ENCODE measurements at regions of chr13 and their contacts with region 1.

Region 1: GRCh38 chr13:72808917-72809500 is 27.1 kb downstream of the PIBF1 start:
- DNase-seq: peak in 2 of 9 experiments; percentile 41 to 57
- ATAC-seq: peak; percentile 36
- H3K4me3 ChIP-seq: no peak overlapping the region
- H3K4me3 Mint-ChIP-seq: no peak overlapping the region
- H3K27ac ChIP-seq: no peak overlapping the region
- H3K27ac Mint-ChIP-seq: no peak overlapping the region
- H3K4me1 ChIP-seq: no peaks in the 10 kb centered on the region
- H3K4me1 Mint-ChIP-seq: peaks cover 4% of the 10 kb centered on the region
- H3K27me3 ChIP-seq: no peaks in the 10 kb centered on the region
- H3K27me3 Mint-ChIP-seq: no peaks in the 10 kb centered on the region
- CTCF ChIP-seq: peak; percentile 89

Region 2: DNA sequence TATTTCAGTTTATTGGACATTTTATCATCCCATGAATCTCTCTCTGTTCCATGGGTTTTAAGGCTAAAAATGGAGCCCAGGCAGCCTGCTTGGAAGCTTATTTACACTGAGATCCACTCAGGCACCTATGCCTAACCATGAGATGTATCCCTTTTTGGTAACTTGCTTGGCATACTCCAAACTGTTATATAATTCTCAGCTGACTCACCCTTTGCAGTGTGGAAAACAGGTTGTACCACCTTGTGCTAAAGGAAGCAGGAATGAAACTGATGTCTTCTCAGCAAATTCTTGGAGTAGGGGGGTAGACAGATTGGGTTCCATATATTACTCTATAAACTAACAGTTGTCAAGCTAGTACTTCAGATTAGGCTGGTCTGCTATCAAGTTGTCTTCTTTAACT is 733.4 kb after region 1 on chr13:
- CTCF ChIA-PET with region 1: no interaction called
- POLR2A ChIA-PET with region 1: no interaction called
- intact Hi-C with region 1: no loop called
- DNase-seq: no peak
- ATAC-seq: no peak
- H3K4me3 ChIP-seq: no peak overlapping the region
- H3K4me3 Mint-ChIP-seq: no peak overlapping the region
- H3K27ac ChIP-seq: no peak overlapping the region
- H3K27ac Mint-ChIP-seq: no peak overlapping the region
- H3K4me1 ChIP-seq: no peaks in the 10 kb centered on the region
- H3K4me1 Mint-ChIP-seq: no peaks in the 10 kb centered on the region
- H3K27me3 ChIP-seq: no peaks in the 10 kb centered on the region
- H3K27me3 Mint-ChIP-seq: no peaks in the 10 kb centered on the region
- CTCF ChIP-seq: no peak

Region 3: DNA sequence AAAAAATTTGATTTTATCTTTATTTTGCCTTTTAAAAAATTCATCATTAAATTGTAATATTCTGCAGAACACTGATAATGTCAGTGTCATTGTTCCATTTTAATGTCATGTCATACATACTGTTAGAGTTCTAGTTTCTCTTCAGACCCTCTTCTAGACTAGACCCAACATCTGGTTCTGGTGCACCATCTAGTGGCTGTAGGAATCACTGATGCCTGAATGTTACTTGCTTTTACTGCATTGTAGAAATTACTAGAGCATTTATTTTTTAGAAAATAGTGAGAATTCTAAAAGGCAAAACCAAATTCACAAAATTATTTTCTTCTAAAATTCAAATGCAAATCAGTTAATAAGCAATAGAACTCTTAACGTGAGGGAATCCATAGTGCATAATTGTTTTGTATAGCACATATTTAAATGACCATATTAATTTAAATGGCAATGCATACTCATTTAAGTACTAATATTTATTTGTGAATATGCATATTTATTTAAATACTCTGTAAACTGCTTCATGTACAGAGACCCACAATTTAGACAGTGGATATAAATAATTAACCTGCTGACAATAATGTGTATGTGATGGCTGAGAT is 899.5 kb after region 1 on chr13:
- CTCF ChIA-PET with region 1: no interaction called
- POLR2A ChIA-PET with region 1: no interaction called
- intact Hi-C with region 1: loop called (anchors 1 to 2 kb)
- DNase-seq: peak; percentile 9 to 83 (median 52)
- ATAC-seq: peak; percentile 94
- H3K4me3 ChIP-seq: no peak overlapping the region
- H3K4me3 Mint-ChIP-seq: no peak overlapping the region
- H3K27ac ChIP-seq: no peak overlapping the region
- H3K27ac Mint-ChIP-seq: no peak overlapping the region
- H3K4me1 ChIP-seq: peaks cover 8% of the 10 kb centered on the region
- H3K4me1 Mint-ChIP-seq: peaks cover 11% of the 10 kb centered on the region
- H3K27me3 ChIP-seq: no peaks in the 10 kb centered on the region
- H3K27me3 Mint-ChIP-seq: no peaks in the 10 kb centered on the region
- CTCF ChIP-seq: peak; percentile 92

Region 4: GRCh38 chr13:74306496-74306895 is 1497.5 kb after region 1 on chr13:
- CTCF ChIA-PET with region 1: no interaction called
- POLR2A ChIA-PET with region 1: no interaction called
- intact Hi-C with region 1: loop called in 1 of 2 experiments (anchors 10 kb)
- DNase-seq: peak in 2 of 9 experiments; percentile 19 to 31
- ATAC-seq: no peak
- H3K4me3 ChIP-seq: no peak overlapping the region
- H3K4me3 Mint-ChIP-seq: no peak overlapping the region
- H3K27ac ChIP-seq: no peak overlapping the region
- H3K27ac Mint-ChIP-seq: peak overlapping the region; percentile 1
- H3K4me1 ChIP-seq: no peaks in the 10 kb centered on the region
- H3K4me1 Mint-ChIP-seq: peaks cover 12% of the 10 kb centered on the region
- H3K27me3 ChIP-seq: no peaks in the 10 kb centered on the region
- H3K27me3 Mint-ChIP-seq: no peaks in the 10 kb centered on the region
- CTCF ChIP-seq: no peak

Measured in CD8-positive, alpha-beta T cell (primary cell).